Heart right ventricle (tissue), 16 donors: ENCODE measurements at regions of chr6 and their contacts with region 1.

Region 1: GRCh38 chr6:111873178-111874024 is at the start of gene FYN:
- DNase-seq: peak; percentile 98 to 99
- ATAC-seq: peak; percentile 99 to 100 (median 99)
- H3K4me3 ChIP-seq: peak within 1 kb of the TSS; percentile 78 to 91 (median 86)
- H3K27ac ChIP-seq: peak within 1 kb of the TSS; percentile 76 to 92 (median 88)
- H3K4me1 ChIP-seq: peaks cover 0 to 45% (median 28%) of the 10 kb centered on the region in 9 donors
- H3K27me3 ChIP-seq: no peaks in the 10 kb centered on the region
- CTCF ChIP-seq: peak; percentile 26 to 58 (median 44)
- total RNA-seq, gene FYN: 33.5 to 58.1 (median 45.6) TPM

Region 2: DNA sequence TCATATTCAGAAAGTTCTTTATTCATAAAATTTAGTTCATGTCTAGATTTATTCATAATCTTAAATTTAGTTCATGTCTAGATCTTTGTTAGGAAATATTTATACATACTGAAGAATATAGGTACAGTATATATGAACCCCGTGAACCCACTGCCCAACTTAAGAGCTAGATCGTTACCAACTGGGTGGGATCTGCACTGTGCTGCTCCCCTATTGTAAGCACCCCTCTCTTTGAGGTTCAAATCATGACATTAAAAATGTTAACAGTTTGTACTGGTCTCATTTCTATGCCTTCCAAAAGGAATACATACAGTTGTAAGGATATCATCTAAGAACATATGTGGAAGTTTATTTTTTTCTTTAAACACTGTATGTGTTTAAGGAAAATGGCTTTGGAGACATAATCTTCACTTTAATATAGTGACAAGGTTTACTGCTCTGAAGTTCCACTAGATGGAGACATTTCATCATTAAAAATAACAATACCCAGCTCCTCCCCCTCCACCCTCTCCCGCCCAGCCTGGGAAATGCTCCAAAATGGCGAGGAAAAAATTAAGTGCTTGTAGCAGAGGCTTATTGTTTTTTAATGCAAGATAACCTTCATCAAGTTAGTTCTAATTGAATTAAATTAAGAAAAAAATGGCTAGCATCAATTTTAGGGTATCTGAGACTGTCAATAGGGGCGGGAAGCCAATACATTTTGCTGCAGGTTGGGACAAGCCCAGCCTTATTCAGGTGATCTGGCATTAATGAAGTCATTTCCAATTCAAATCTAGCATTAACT is 163.6 kb before region 1 on chr6:
- intact Hi-C with region 1: loop called in 7 of 10 experiments (anchors 2 to 10 kb)
- DNase-seq: peak; percentile 41 to 86
- ATAC-seq: peak; percentile 74 to 89 (median 78)
- H3K4me3 ChIP-seq: peak overlapping the region in 4 of 10 donors; percentile 7 to 25 (median 12)
- H3K27ac ChIP-seq: peak overlapping the region in 9 of 10 donors; percentile 10 to 72 (median 49)
- H3K4me1 ChIP-seq: peaks cover 12 to 42% (median 33%) of the 10 kb centered on the region in 9 donors
- H3K27me3 ChIP-seq: no peaks in the 10 kb centered on the region
- CTCF ChIP-seq: peak; percentile 44 to 83 (median 75)

Region 3: GRCh38 chr6:111737065-111737521 is 136.3 kb before region 1 on chr6:
- intact Hi-C with region 1: loop called in 3 of 10 experiments (anchors 5 to 10 kb)
- DNase-seq: no peak
- ATAC-seq: peak in 1 of 8 donors; percentile 9
- H3K4me3 ChIP-seq: no peak overlapping the region
- H3K27ac ChIP-seq: no peak overlapping the region
- H3K4me1 ChIP-seq: peaks cover 5 to 78% (median 56%) of the 10 kb centered on the region in 9 donors
- H3K27me3 ChIP-seq: no peaks in the 10 kb centered on the region
- CTCF ChIP-seq: no peak

Region 4: GRCh38 chr6:111764238-111765175 is 108.9 kb before region 1 on chr6:
- intact Hi-C with region 1: loop called in 1 of 10 experiments (anchors 5 kb)
- DNase-seq: no peak
- ATAC-seq: no peak
- H3K4me3 ChIP-seq: no peak overlapping the region
- H3K27ac ChIP-seq: peak overlapping the region in 4 of 10 donors; percentile 16 to 80 (median 42)
- H3K4me1 ChIP-seq: peaks cover 2 to 94% (median 81%) of the 10 kb centered on the region in 9 donors
- H3K27me3 ChIP-seq: no peaks in the 10 kb centered on the region
- CTCF ChIP-seq: no peak

Region 5: GRCh38 chr6:111832833-111833418 is 40.5 kb before region 1 on chr6:
- intact Hi-C with region 1: loop called in 1 of 10 experiments (anchors 5 kb)
- DNase-seq: no peak
- ATAC-seq: no peak
- H3K4me3 ChIP-seq: peak overlapping the region in 1 of 10 donors; percentile 11
- H3K27ac ChIP-seq: peak overlapping the region in 5 of 10 donors; percentile 10 to 44 (median 25)
- H3K4me1 ChIP-seq: peaks cover 0 to 74% (median 54%) of the 10 kb centered on the region in 9 donors
- H3K27me3 ChIP-seq: no peaks in the 10 kb centered on the region
- CTCF ChIP-seq: no peak